Gastrocnemius medialis (tissue), 4 donors: ENCODE measurements at regions of chr20 and their contacts with region 1.

Region 1: DNA sequence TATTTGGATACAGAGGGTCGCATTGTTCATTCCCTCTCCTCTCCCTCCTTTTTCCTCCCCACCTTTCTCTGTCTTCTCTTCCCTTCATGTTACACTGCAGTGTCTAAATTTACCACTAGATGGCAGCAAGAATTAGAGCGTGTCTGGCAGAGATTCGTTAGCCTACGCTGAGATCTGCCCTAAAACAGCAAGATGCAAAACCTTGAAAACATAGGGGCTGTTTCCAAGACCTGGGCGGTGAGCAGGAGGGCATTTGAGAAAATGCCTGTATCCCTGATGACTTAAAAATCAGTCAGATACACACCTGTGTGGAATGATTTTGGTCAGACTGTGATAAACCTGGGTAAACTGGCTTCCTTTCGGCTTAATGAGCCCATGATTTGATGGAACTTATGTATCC is 101.5 kb upstream of the ISM1 start:
- DNase-seq: peak in 1 of 2 donors; percentile 20
- ATAC-seq: peak; percentile 83 to 88
- H3K4me3 ChIP-seq: no peak overlapping the region
- H3K27ac ChIP-seq: no peak overlapping the region
- H3K4me1 ChIP-seq: no peaks in the 10 kb centered on the region
- H3K27me3 ChIP-seq: no peaks in the 10 kb centered on the region
- CTCF ChIP-seq: peak; percentile 69 to 90 (median 72)
- POLR2A ChIP-seq: no peak

Region 2: DNA sequence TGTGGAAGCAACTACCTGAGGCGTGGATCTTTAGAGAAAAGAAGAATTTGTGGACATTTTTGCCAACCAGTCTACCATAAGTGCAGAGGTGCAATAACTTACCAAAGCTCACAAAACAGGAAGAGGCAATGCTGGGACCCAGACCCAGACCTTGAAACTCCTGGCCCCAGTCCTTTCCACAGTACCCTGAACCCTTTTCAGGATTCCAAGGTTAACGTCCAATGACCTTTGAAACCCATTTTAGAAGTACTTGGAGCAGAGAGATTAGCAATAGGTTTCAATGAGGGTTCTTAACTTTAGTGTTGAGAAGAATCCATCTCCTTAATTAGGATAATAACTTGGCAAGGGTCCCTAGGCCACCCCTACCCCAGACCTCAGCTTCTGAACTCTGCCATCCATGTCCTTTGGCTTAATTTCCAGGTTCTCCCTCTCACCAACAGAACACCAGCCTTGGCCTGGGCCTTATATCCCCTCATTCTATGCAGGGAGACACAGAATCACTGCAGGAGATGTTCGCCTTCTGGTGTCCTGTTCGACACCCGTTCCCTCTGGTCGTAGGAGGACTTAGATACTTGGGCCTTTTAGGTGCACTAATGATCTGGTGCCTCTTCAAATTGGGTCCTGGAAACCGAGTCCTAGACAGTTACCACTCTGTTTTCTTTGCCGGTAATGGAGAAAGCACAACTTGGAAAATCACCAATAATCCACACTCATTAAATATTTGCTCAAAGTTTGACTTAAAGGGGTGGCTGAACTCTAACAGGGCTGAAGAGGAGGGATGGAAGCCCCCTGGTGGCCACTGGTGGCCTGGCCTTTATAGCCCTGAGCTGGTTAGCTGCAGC is 142.1 kb after region 1 on chr20:
- in situ Hi-C with region 1: loop called in 1 of 4 experiments (anchors 10 kb)
- intact Hi-C with region 1: loop called (anchors 1 kb)
- DNase-seq: peak in 1 of 2 donors; percentile 23
- ATAC-seq: peak in 1 of 2 donors; percentile 39
- H3K4me3 ChIP-seq: no peak overlapping the region
- H3K27ac ChIP-seq: no peak overlapping the region
- H3K4me1 ChIP-seq: no peaks in the 10 kb centered on the region
- H3K27me3 ChIP-seq: no peaks in the 10 kb centered on the region
- CTCF ChIP-seq: peak in 3 of 5 experiments; percentile 42 to 70 (median 65)
- POLR2A ChIP-seq: no peak

Region 3: DNA sequence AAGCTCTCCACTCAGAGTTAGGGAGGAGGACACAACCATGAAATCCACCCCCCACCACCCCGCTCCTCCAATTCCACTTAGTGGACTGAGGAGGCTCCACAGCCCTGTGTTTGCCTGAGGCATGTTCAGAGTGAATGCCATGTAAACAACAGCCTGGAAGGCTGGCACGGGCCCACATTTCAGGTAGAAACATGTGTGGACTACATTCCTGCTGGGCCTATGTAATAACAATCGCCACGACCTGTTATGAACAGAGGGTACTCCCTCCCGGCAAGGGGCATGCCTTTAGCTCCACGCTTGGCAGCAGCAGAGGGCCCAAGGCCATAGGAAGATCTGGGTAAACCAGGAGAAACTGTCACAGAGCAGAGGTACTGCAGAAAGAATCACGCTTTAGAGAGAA is 167.0 kb after region 1 on chr20:
- in situ Hi-C with region 1: loop called in 1 of 4 experiments (anchors 25 kb)
- intact Hi-C with region 1: no loop called
- DNase-seq: no peak
- ATAC-seq: no peak
- H3K4me3 ChIP-seq: no peak overlapping the region
- H3K27ac ChIP-seq: no peak overlapping the region
- H3K4me1 ChIP-seq: no peaks in the 10 kb centered on the region
- H3K27me3 ChIP-seq: no peaks in the 10 kb centered on the region
- CTCF ChIP-seq: no peak
- POLR2A ChIP-seq: no peak

Region 4: DNA sequence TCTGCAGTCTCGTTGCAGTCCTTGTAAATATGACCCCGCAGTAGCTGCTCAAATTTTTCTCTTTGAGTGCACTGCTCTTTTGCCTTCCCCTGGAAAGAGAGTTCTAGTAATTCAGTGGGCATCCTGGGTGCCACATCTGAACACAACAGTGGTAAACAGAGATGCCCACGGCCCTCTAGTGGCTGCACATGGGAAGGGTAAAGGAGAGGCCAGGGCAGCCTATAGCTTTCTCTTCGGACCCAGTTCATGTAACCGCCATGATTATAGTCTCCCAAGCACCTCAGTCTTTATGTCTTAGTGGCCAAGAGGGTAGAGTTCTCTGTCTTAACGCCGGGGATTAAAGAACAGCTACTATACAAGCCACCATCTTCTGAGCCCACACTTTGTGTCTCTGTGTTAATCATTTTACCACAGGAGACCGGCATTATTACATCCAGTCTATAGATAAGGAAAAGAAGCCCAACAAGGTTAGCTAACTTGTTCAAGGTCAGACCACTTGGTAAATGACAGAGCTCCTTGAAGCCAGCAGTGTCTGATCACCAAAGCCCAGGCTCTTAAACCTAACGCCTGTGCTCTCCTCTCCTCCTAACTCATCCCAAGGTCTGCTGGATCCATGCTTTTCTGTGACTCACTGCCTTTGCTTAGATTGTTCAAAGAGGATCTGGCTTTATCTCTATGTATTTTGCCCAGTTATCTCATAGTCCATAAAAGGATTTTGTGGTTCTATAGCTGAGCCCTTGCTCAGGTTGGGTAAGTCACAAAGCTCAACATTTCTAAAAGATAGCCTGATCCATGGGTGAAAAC is 183.3 kb after region 1 on chr20:
- in situ Hi-C with region 1: loop called in 1 of 4 experiments (anchors 25 kb)
- intact Hi-C with region 1: loop called (anchors 2 kb)
- DNase-seq: no peak
- ATAC-seq: no peak
- H3K4me3 ChIP-seq: no peak overlapping the region
- H3K27ac ChIP-seq: no peak overlapping the region
- H3K4me1 ChIP-seq: no peaks in the 10 kb centered on the region
- H3K27me3 ChIP-seq: no peaks in the 10 kb centered on the region
- CTCF ChIP-seq: peak in 4 of 5 experiments; percentile 25 to 53 (median 43)
- POLR2A ChIP-seq: no peak

Region 5: GRCh38 chr20:13546497-13547131 is 427.0 kb after region 1 on chr20:
- in situ Hi-C with region 1: loop called in 3 of 4 experiments (anchors 10 to 25 kb)
- intact Hi-C with region 1: loop called (anchors 2 kb)
- DNase-seq: peak; percentile 6 to 31
- ATAC-seq: peak in 1 of 2 donors; percentile 53
- H3K4me3 ChIP-seq: no peak overlapping the region
- H3K27ac ChIP-seq: no peak overlapping the region
- H3K4me1 ChIP-seq: no peaks in the 10 kb centered on the region
- H3K27me3 ChIP-seq: no peaks in the 10 kb centered on the region
- CTCF ChIP-seq: peak; percentile 22 to 67 (median 51)
- POLR2A ChIP-seq: no peak

Region 6: DNA sequence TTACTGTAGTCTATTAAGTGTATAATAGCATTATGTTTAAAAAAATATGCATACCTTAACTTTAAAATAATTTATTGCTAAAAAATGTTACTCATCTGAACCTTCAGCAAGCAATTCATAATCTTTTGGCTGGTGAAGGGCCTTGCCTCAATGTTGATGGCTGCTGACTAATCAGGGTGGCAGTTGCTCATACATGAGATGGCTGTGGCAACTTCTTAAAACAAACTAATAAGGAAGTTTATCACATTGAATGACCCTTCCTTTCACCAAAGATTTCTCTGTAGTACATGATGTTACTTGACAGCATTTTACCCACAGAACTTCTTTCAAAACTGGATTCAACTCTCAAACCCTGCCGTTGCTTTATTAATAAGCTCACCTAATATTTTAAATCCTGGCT is 435.1 kb after region 1 on chr20:
- in situ Hi-C with region 1: loop called in 3 of 4 experiments (anchors 10 to 25 kb)
- intact Hi-C with region 1: no loop called
- DNase-seq: no peak
- ATAC-seq: no peak
- H3K4me3 ChIP-seq: no peak overlapping the region
- H3K27ac ChIP-seq: no peak overlapping the region
- H3K4me1 ChIP-seq: no peaks in the 10 kb centered on the region
- H3K27me3 ChIP-seq: no peaks in the 10 kb centered on the region
- CTCF ChIP-seq: no peak
- POLR2A ChIP-seq: no peak

Region 7: GRCh38 chr20:13771853-13772453 is 652.4 kb after region 1 on chr20:
- in situ Hi-C with region 1: loop called (anchors 5 to 25 kb)
- intact Hi-C with region 1: loop called (anchors 5 kb)
- DNase-seq: no peak
- ATAC-seq: no peak
- H3K4me3 ChIP-seq: no peak overlapping the region
- H3K27ac ChIP-seq: no peak overlapping the region
- H3K4me1 ChIP-seq: peaks cover 0 to 1% of the 10 kb centered on the region in 2 donors
- H3K27me3 ChIP-seq: no peaks in the 10 kb centered on the region
- CTCF ChIP-seq: peak in 4 of 5 experiments; percentile 13 to 56 (median 31)
- POLR2A ChIP-seq: no peak